ENCODE measurements at regions of chr19 and their contacts with region 1.

Region 1: DNA sequence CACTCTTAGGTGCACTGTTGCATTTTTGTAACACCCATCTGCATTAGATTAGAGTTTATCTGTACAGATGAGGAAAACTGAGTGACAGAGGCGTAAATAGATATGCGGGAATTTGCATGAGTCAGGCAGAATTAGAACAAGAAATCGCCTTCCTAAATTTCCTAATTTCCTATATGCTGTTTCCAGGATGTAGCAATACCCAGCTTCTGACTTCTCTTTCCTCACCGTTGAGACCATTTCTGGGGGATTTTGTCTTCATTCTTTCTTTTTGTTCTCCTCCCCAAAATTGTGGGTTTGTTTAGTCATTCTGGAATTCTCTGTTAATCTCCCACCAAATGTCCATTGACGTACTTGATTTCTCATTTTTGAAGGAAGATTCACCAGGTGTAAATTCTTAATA is 10.6 kb upstream of the ZNF792 start:
- DNase-seq: no peak
- ATAC-seq: no peak

Region 2: DNA sequence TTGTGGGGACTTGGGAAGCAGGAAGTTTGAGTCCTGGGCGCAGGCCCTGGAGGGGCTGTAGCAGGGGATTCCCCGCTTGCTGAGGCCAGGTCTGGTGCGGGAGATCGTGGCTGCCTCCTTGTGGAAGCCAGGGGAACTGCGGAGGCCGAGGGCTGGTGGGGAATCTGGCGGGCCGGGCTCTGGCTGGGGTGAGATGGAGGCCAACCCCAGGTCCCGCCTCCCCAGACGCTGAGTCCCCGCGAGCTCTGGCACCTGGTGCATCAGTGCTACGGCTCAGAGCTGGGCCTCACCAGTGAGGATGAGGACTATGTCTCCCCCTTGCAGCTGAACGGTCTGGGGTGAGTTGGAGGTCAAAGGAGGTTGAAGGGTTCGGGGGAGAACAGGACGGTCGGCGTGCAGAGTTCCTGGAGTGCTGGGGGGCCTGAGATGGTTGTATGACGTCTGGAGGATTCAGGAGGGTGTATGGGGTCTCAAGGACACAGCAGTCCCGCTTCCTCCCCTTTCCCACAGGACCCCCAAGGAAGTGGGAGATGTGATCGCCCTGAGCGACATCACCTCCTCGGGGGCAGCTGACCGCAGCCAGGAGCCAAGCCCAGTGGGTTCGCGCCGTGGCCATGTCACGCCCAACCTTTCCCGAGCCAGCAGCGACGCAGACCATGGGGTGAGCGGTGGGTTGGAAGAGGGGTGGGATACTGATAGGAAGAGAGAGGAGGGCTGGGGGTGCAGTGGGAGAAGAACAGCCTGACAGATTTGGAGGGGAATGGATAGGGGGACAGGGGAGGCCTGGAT is 38.6 kb after region 1 on chr19:
- intact Hi-C with region 1: loop called (anchors 5 kb)
- DNase-seq: peak; percentile 85
- ATAC-seq: peak; percentile 76